ENCODE measurements at regions of chr10 and their contacts with region 1.

Region 1: GRCh38 chr10:71812016-71812912 is 38.8 kb downstream of the PSAP start:
- DNase-seq: peak; percentile 63 to 78 (median 75)
- H3K4me3 ChIP-seq: no peak overlapping the region
- H3K4me3 Mint-ChIP-seq: no peak overlapping the region
- H3K27ac ChIP-seq: no peak overlapping the region
- H3K27ac Mint-ChIP-seq: no peak overlapping the region
- H3K4me1 ChIP-seq: no peaks in the 10 kb centered on the region
- H3K4me1 Mint-ChIP-seq: peaks cover 0 to 2% (median 0%) of the 10 kb centered on the region in 4 donors
- H3K27me3 ChIP-seq: no peaks in the 10 kb centered on the region
- H3K27me3 Mint-ChIP-seq: no peaks in the 10 kb centered on the region

Region 2: GRCh38 chr10:71383972-71384687 is 428.1 kb before region 1 on chr10:
- CTCF ChIA-PET with region 1: interaction called, 32 read pairs
- POLR2A ChIA-PET with region 1: interaction called, 4 read pairs
- intact Hi-C with region 1: loop called (anchors 1 kb)
- DNase-seq: peak; percentile 56 to 67 (median 60)
- H3K4me3 ChIP-seq: no peak overlapping the region
- H3K4me3 Mint-ChIP-seq: no peak overlapping the region
- H3K27ac ChIP-seq: no peak overlapping the region
- H3K27ac Mint-ChIP-seq: no peak overlapping the region
- H3K4me1 ChIP-seq: no peaks in the 10 kb centered on the region
- H3K4me1 Mint-ChIP-seq: peaks cover 0 to 3% (median 0%) of the 10 kb centered on the region in 4 donors
- H3K27me3 ChIP-seq: no peaks in the 10 kb centered on the region
- H3K27me3 Mint-ChIP-seq: peaks cover 2 to 3% of the 10 kb centered on the region in 2 donors

Region 3: DNA sequence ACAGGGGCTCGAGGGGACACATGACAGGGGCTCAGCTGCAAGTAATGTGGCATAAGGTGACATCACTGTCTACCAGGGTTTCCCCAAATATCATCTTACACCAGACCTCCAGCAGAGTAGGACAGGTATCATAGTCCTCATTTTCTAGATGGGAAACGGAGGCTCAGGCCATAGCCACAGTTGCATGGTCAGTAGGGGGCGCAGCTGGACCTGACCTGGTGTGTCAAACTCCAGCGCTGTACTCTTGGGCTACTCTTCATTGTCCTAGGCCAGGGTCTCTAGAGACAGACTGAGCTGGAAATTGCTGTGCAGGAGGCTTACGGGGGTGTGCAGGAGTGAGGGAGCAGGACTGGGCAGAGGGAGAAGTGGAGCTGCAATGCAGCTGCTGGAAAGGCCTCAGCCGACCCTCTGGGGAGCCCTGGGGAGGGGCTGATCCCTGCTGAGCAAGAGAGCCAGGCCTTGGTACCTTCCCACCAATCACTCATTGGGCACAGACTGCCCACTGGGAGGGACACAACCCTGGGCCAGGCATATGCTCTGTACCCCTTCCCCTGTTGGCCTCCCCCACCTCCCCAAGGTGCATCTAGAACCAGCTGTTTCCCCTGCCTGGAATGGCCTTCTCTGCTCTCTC is 325.7 kb before region 1 on chr10:
- CTCF ChIA-PET with region 1: no interaction called
- POLR2A ChIA-PET with region 1: no interaction called
- intact Hi-C with region 1: loop called (anchors 1 kb)
- DNase-seq: peak in 3 of 5 donors; percentile 7 to 44 (median 8)
- H3K4me3 ChIP-seq: no peak overlapping the region
- H3K4me3 Mint-ChIP-seq: no peak overlapping the region
- H3K27ac ChIP-seq: no peak overlapping the region
- H3K27ac Mint-ChIP-seq: no peak overlapping the region
- H3K4me1 ChIP-seq: no peaks in the 10 kb centered on the region
- H3K4me1 Mint-ChIP-seq: no peaks in the 10 kb centered on the region
- H3K27me3 ChIP-seq: no peaks in the 10 kb centered on the region
- H3K27me3 Mint-ChIP-seq: peaks cover 7 to 9% of the 10 kb centered on the region in 2 donors

Region 4: GRCh38 chr10:71665456-71665855 is 146.8 kb before region 1 on chr10:
- CTCF ChIA-PET with region 1: interaction called, 20 read pairs
- POLR2A ChIA-PET with region 1: no interaction called
- intact Hi-C with region 1: loop called (anchors 1 kb)
- DNase-seq: no peak
- H3K4me3 ChIP-seq: no peak overlapping the region
- H3K4me3 Mint-ChIP-seq: no peak overlapping the region
- H3K27ac ChIP-seq: no peak overlapping the region
- H3K27ac Mint-ChIP-seq: no peak overlapping the region
- H3K4me1 ChIP-seq: no peaks in the 10 kb centered on the region
- H3K4me1 Mint-ChIP-seq: peaks cover 1 to 18% (median 9%) of the 10 kb centered on the region in 4 donors
- H3K27me3 ChIP-seq: no peaks in the 10 kb centered on the region
- H3K27me3 Mint-ChIP-seq: peaks cover 0 to 6% of the 10 kb centered on the region in 2 donors

Measured in CD4-positive, alpha-beta memory T cell (primary cell).